ENCODE measurements at regions of chr11 and their contacts with region 1.

Region 1: GRCh38 chr11:86456052-86456939 is 81.6 kb downstream of the CCDC81 start:
- DNase-seq: peak; percentile 93

Region 2: DNA sequence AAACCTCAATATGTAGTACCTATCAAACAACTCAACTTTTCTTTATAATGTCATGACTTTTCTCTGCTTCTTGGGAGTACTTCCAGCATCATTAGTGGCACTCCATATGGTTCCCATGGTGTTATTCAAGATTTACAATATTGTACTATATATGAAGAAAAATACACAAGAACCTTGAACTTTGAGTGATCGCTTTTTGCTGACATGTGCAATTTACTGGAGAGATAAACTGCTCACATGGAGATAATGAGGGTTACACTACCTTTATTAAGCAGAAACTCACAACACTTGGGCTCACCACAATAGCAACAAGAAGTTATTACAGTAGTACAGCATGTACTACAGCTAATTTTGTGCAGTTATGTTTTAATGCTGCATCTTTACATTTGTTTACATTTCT is 1217.4 kb before region 1 on chr11:
- intact Hi-C with region 1: no loop called
- DNase-seq: no peak

Region 3: DNA sequence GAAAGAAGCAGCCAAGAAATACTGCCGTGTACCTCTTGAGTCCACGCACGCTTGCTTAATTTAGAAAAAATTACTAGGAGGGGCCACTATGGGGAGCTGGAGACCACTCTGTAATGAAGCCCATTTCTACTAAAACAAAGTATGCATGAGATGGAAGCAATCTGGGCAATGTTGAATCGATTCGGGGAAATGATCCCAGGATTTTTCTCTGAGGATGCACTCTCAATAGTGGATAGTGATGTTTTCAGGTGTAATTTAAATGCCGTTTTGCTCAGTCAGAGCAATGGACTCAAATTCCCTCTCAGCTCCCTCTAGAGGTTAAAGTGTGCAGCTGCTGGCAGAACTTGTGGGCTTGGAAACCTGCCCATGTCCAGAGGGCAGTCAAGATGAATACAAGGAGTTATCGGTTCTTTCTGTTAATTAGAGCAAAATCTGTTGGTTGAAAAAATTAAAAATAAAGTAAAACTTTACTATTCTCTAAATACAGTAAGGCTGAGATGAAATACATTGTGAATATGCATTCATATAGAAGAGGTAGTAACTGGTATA is 152.0 kb after region 1 on chr11:
- intact Hi-C with region 1: loop called in 1 of 2 experiments (anchors 5 kb)
- DNase-seq: no peak

Region 4: DNA sequence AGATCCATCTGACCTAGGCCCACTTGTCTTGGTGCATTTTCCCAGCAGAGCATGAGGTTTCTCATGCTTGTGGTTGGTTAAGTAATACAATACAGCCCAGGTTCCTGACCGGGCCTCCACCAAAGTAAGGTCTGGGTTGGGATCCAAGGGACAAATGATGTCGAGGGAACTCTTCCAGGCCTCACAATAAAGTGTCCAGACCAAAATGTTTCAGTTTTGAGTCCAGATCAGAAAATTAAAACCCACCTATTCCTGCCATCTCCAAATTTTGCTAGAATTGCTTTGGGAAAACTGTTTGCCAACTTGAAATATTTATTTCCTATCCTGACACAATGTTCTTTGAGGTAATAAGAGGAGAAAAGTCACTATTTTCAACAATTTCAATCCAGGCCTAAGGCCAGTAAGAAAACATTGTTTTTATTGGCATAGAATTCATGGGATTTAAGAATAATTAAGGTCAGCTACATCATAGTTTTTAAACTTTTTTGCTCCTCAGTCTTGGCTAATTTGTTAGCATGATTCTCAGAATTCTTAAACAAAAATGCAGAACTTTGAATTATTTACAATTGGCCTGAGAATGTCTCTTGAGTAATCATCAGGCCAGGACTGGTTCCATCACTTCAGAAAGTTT is 164.7 kb after region 1 on chr11:
- intact Hi-C with region 1: loop called in 1 of 2 experiments (anchors 5 kb)
- DNase-seq: no peak

Region 5: DNA sequence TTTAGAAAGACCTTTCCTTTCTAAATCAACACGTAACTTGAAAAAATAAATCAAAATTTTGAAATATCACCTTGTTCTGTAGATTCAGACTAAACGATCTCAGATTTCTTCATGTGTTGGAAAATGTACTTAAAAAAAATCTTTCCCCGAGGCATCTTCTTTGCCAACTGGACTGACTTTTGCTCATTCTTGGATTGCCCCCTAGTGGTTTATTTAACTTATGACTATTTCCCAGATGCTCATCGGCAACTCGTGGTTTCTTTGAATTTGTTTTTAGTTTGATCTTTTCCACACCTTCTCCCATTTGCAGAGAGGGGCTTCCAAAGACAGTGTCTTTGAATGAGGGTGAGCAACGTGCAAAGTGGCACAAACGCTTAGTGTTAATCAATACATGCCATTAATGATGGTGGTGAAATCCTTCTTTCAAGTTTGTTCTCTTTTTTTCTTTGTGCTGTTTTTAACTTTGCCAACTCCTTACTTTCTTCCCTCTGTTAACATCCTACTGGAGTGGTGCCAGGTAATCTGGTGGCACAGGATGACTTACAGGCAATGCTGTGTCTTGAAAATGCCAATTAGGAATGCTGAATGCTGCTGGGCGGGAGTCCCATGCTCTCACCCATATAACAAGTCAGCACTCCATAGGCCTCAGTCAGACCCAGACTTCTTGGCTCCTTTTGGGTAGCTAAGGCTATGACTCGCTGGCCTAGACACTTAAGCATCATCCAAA is 362.3 kb after region 1 on chr11:
- intact Hi-C with region 1: loop called (anchors 2 to 10 kb)
- DNase-seq: no peak

Region 6: DNA sequence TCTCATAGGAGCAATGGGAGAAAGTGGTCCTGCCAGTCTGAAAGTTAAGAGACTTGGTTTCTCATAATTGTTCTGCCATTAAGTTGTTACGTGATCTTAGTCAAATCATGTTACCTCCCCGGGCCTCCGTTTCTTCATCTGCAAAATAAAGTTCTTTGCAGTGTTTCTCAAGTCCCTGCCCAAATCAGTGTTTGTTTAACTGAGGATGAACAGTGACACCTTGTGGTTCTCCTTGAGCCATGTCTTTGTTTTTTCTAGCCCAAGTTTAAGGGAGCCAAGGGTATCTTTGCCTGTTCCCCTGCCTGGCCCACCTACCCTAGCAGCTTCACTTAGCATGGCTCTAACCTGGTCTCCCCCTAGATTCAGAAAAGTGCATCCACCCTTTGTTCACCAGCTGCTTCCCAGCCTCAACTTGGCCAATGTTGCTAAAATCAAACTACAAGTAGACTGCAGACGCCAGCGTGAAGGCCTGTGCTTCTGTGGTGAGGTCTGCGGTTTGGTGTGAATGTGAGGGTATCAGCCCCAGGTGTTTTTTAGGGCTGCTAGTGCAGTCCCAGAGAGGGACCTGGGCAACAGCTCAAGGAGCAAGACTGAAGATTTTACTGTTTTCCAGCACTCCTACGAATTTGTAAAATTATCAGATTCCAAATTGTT is 463.4 kb after region 1 on chr11:
- intact Hi-C with region 1: loop called in 1 of 2 experiments (anchors 10 kb)
- DNase-seq: no peak

Region 7: GRCh38 chr11:87572881-87573280 is 1116.6 kb after region 1 on chr11:
- intact Hi-C with region 1: no loop called
- DNase-seq: no peak

Measured in posterior vena cava (tissue), 2 donors.